ENCODE measurements at regions of chr13 and their contacts with region 1.

Region 1: GRCh38 chr13:74133657-74134201 is 475 bp downstream of the KLF12 start:
- DNase-seq: peak; percentile 95
- H3K4me3 ChIP-seq: peak overlapping the region; percentile 84
- H3K27ac ChIP-seq: peak overlapping the region; percentile 83
- H3K4me1 ChIP-seq: peaks cover 24% of the 10 kb centered on the region
- H3K27me3 ChIP-seq: no peaks in the 10 kb centered on the region
- CTCF ChIP-seq: no peak

Region 2: DNA sequence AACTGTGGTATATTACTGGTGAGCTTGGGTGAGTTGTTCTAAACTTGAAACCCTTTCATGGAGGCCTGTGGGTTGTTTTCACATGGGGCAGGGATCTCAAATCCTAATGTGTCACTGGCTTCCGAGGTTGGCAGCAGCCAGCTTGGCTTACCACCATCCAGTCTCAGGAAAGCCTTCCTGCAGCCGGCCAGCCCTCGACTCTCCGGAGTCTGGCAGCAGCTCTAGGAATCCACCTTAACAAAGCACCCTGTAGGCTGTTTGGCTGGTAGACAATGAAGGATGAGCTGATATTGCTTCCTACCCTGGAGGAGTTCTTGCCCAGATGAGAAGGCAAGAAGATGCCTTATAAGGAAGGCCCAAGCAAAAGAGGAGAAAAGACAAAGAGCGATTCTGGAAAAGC is 187.9 kb before region 1 on chr13:
- CTCF ChIA-PET with region 1: no interaction called
- POLR2A ChIA-PET with region 1: no interaction called
- intact Hi-C with region 1: loop called (anchors 5 kb)
- DNase-seq: peak; percentile 12
- H3K4me3 ChIP-seq: no peak overlapping the region
- H3K27ac ChIP-seq: no peak overlapping the region
- H3K4me1 ChIP-seq: peaks cover 13% of the 10 kb centered on the region
- H3K27me3 ChIP-seq: no peaks in the 10 kb centered on the region
- CTCF ChIP-seq: no peak

Measured in A673 (cell line).